Sciatic nerve (tissue), 2 donors: ENCODE measurements at regions of chr7 and their contacts with region 1.

Region 1: DNA sequence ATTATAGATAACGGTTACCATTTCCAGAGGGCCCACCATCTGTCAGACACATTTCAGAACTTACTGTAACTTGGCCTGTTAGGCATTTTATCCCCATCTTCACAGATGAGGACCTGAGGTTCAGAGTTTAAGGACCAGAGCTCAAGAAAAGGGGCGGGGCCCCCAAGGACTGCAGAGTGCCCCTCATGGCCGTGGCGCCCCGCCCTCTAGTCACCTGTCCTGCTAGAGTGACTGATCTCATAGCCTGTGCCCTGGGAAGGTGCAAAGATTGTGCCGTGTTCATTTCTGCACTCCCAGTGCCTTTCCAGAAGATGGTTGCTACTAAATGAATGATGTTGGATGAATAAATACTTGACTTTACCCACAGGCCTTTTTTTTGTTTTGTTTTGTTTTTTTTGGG is 107.0 kb downstream of the XRCC2 start:
- DNase-seq: no peak
- ATAC-seq: no peak

Region 2: GRCh38 chr7:152989889-152990380 is 421.0 kb after region 1 on chr7:
- intact Hi-C with region 1: loop called (anchors 5 kb)
- DNase-seq: no peak
- ATAC-seq: no peak